ENCODE measurements at regions of chr3 and their contacts with region 1.

Region 1: DNA sequence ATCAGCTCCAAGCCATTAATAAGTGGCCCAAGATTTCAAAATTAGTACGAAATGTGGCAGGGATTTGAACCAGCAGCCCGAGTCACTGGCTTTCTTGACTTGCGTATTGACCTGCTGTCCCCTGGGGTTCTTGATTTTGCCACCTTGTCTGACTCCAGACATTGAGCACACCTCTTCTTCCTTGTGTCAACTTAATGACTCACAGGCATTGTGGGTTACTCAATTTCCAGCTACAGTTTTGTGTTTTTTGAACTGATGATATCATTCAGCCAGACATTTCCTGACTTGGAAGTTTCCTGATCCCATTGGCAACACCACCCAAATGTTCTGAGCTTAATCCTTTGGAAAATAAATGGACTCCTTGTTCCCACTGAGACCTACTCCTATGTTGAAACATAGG is 64.2 kb downstream of the MOBP start:
- DNase-seq: no peak
- H3K4me3 ChIP-seq: no peak overlapping the region
- H3K27ac ChIP-seq: no peak overlapping the region
- H3K4me1 ChIP-seq: peaks cover 0 to 6% of the 10 kb centered on the region in 2 experiments; a peak in 1 of 4 replicates
- H3K27me3 ChIP-seq: no peaks in the 10 kb centered on the region
- CTCF ChIP-seq: no peak
- EP300 ChIP-seq: no peak
- RAD21 ChIP-seq: no peak

Region 2: GRCh38 chr3:39154280-39155021 is 377.2 kb before region 1 on chr3:
- CTCF ChIA-PET with region 1: no interaction called
- POLR2A ChIA-PET with region 1: no interaction called
- DNase-seq: no peak
- H3K4me3 ChIP-seq: no peak overlapping the region
- H3K27ac ChIP-seq: no peak overlapping the region
- H3K4me1 ChIP-seq: peaks cover 13 to 34% of the 10 kb centered on the region in 2 experiments; a peak in 3 of 4 replicates
- H3K27me3 ChIP-seq: no peaks in the 10 kb centered on the region
- CTCF ChIP-seq: no peak
- EP300 ChIP-seq: no peak
- RAD21 ChIP-seq: no peak

Region 3: GRCh38 chr3:39288300-39288808 is 243.3 kb before region 1 on chr3:
- CTCF ChIA-PET with region 1: no interaction called
- POLR2A ChIA-PET with region 1: no interaction called
- DNase-seq: peak; percentile 92
- H3K4me3 ChIP-seq: no peak overlapping the region; a peak in 1 of 4 replicates
- H3K27ac ChIP-seq: no peak overlapping the region
- H3K4me1 ChIP-seq: no peaks in the 10 kb centered on the region
- H3K27me3 ChIP-seq: no peaks in the 10 kb centered on the region
- CTCF ChIP-seq: peak; percentile 95
- EP300 ChIP-seq: no peak
- RAD21 ChIP-seq: peak; percentile 98

Region 4: DNA sequence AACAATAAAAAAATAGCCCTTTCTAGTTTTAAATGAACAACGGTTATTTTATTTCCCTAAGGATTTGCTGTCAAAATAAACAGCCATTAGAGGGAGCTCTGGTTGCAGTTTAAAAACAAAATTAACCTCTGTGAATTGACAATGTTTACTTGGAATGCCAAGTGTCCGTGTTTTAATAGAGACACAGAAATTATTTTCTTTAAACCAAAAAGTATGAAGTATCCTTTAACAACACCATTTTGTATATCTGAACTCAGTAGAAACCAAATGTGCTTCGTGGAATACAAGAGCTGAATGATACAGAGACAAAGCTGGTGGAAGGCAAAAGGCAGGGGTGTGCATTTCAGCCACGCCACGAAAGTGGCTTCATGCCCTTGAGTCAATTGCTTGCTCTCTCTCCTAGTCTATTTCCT is 10.3 kb after region 1 on chr3:
- CTCF ChIA-PET with region 1: interaction called, 18 read pairs
- POLR2A ChIA-PET with region 1: no interaction called
- DNase-seq: peak; percentile 6
- H3K4me3 ChIP-seq: peak overlapping the region in 1 of 2 experiments; percentile 16; a peak in 1 of 4 replicates
- H3K27ac ChIP-seq: no peak overlapping the region
- H3K4me1 ChIP-seq: no peaks in the 10 kb centered on the region; a peak in 1 of 4 replicates
- H3K27me3 ChIP-seq: no peaks in the 10 kb centered on the region
- CTCF ChIP-seq: peak; percentile 71
- EP300 ChIP-seq: no peak
- RAD21 ChIP-seq: peak; percentile 71